ENCODE measurements at regions of chr6 and their contacts with region 1.

Region 1: GRCh38 chr6:6856538-6857523 is 250.9 kb upstream of the RREB1 start:
- DNase-seq: peak; percentile 58 to 84
- H3K4me3 ChIP-seq: peak overlapping the region; percentile 29
- H3K4me3 Mint-ChIP-seq: peak overlapping the region; percentile 56
- H3K27ac Mint-ChIP-seq: peak overlapping the region; percentile 84
- H3K4me1 ChIP-seq: peaks cover 20% of the 10 kb centered on the region
- H3K4me1 Mint-ChIP-seq: peaks cover 31% of the 10 kb centered on the region
- H3K27me3 ChIP-seq: no peaks in the 10 kb centered on the region
- H3K27me3 Mint-ChIP-seq: no peaks in the 10 kb centered on the region
- CTCF ChIP-seq: no peak

Region 2: DNA sequence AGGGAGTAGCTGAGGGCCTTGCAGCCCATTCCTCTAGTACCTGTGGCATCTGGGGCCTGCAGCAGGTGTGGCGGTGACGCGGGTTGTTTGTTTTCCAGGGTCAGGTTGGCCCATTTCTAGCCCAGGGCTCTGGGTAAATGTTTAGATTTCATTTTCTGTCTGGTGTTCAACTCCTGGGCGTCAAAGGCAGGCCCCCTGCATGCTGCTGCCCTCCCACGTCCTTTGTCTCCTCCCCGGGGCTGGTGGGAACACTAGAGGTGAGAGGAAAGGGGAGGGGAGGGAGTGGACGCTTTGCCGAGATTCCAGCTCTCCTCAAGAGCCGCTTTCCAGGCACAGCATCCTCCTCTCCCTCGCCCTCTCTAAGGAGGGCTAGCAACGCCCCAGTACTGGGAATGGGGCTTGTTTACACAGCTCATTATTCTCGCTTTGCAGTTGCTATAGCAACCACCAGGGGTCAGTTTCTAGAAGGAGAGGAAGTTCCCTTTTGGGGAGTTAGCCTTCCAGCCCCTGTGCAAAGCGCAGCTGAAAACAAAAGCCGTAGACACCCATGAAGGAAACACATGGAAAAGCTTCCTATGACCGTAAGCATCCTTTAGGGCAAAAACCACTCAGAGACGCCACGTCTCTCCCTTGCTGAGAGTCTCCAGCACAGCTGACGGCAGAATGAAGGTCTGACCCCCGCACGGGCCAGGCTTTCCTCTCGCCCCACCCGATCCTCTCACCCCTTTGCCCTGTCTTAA is 97.7 kb before region 1 on chr6:
- CTCF ChIA-PET with region 1: interaction called, 4 read pairs
- POLR2A ChIA-PET with region 1: no interaction called
- intact Hi-C with region 1: loop called (anchors 10 kb)
- DNase-seq: peak; percentile 60 to 70
- H3K4me3 ChIP-seq: no peak overlapping the region
- H3K4me3 Mint-ChIP-seq: no peak overlapping the region
- H3K27ac Mint-ChIP-seq: no peak overlapping the region
- H3K4me1 ChIP-seq: peaks cover 5% of the 10 kb centered on the region; the same call in 1 of the 2 replicates
- H3K4me1 Mint-ChIP-seq: no peaks in the 10 kb centered on the region
- H3K27me3 ChIP-seq: no peaks in the 10 kb centered on the region
- H3K27me3 Mint-ChIP-seq: no peaks in the 10 kb centered on the region
- CTCF ChIP-seq: peak; percentile 46 to 62

Region 3: GRCh38 chr6:6826095-6826901 is 30.5 kb before region 1 on chr6:
- CTCF ChIA-PET with region 1: no interaction called
- POLR2A ChIA-PET with region 1: no interaction called
- intact Hi-C with region 1: no loop called
- DNase-seq: no peak
- H3K4me3 ChIP-seq: no peak overlapping the region
- H3K4me3 Mint-ChIP-seq: no peak overlapping the region
- H3K27ac Mint-ChIP-seq: no peak overlapping the region
- H3K4me1 ChIP-seq: no peaks in the 10 kb centered on the region
- H3K4me1 Mint-ChIP-seq: no peaks in the 10 kb centered on the region
- H3K27me3 ChIP-seq: no peaks in the 10 kb centered on the region
- H3K27me3 Mint-ChIP-seq: no peaks in the 10 kb centered on the region
- CTCF ChIP-seq: no peak

Region 4: GRCh38 chr6:7188492-7188891 is 331.7 kb after region 1 on chr6:
- CTCF ChIA-PET with region 1: no interaction called
- POLR2A ChIA-PET with region 1: no interaction called
- intact Hi-C with region 1: no loop called
- DNase-seq: no peak
- H3K4me3 ChIP-seq: no peak overlapping the region
- H3K4me3 Mint-ChIP-seq: no peak overlapping the region
- H3K27ac Mint-ChIP-seq: no peak overlapping the region
- H3K4me1 ChIP-seq: no peaks in the 10 kb centered on the region
- H3K4me1 Mint-ChIP-seq: no peaks in the 10 kb centered on the region
- H3K27me3 ChIP-seq: no peaks in the 10 kb centered on the region
- H3K27me3 Mint-ChIP-seq: no peaks in the 10 kb centered on the region
- CTCF ChIP-seq: no peak